Right ventricle myocardium inferior (tissue), 1 donor: ENCODE measurements at regions of chr7 and their contacts with region 1.

Region 1: GRCh38 chr7:138981332-138982203 is at the start of gene KIAA1549:
- DNase-seq: peak; percentile 78
- ATAC-seq: peak; percentile 94
- total RNA-seq, gene KIAA1549: 1.8 TPM

Region 2: DNA sequence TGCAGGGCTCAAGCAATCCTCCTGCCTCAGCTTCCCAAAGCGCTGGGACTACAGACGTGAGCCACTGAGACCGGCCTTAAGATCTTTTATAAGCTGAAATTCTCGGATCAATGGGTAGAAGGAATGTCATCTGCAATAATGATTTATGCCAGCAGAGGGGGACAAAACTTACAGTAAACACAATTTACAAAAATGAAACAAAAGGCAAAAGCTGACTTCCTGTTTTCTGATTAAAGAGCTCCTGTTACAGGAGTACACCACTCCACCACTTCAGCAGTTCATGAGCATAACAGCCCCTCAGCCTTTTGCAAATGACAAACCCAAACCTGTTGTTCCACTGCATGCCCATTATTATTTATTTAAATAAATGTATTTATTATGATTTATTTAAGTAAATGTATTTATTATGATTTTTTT is 95.1 kb before region 1 on chr7:
- intact Hi-C with region 1: loop called (anchors 1 kb)
- DNase-seq: no peak
- ATAC-seq: no peak

Region 3: GRCh38 chr7:139095194-139095659 is 113.7 kb after region 1 on chr7:
- intact Hi-C with region 1: no loop called
- DNase-seq: peak; percentile 73
- ATAC-seq: peak; percentile 62